Activated T-helper 2 cell treated with anti-CD3 and anti-CD28 coated beads, Interferon-gamma antibody, Interleukin-2, Interleukin-4, amounts not matched to agents 10 μg/mL and 5 μg/mL and 100 μg/mL, durations not matched to agents 14 hours and 24 hours and 36 hours (primary cell): ENCODE measurements at regions of chr2 and their contacts with region 1.

Region 1: GRCh38 chr2:69893684-69894551 is at the start of gene SNRNP27:
- DNase-seq: peak; percentile 72
- H3K4me3 Mint-ChIP-seq: peak within 1 kb of the TSS; percentile 98
- H3K27ac Mint-ChIP-seq: peak within 1 kb of the TSS; percentile 97
- H3K4me1 Mint-ChIP-seq: peaks cover 28% of the 10 kb centered on the region
- H3K27me3 Mint-ChIP-seq: no peaks in the 10 kb centered on the region
- total RNA-seq, gene SNRNP27: 60.4 and 62.6 TPM in 2 replicates

Region 2: DNA sequence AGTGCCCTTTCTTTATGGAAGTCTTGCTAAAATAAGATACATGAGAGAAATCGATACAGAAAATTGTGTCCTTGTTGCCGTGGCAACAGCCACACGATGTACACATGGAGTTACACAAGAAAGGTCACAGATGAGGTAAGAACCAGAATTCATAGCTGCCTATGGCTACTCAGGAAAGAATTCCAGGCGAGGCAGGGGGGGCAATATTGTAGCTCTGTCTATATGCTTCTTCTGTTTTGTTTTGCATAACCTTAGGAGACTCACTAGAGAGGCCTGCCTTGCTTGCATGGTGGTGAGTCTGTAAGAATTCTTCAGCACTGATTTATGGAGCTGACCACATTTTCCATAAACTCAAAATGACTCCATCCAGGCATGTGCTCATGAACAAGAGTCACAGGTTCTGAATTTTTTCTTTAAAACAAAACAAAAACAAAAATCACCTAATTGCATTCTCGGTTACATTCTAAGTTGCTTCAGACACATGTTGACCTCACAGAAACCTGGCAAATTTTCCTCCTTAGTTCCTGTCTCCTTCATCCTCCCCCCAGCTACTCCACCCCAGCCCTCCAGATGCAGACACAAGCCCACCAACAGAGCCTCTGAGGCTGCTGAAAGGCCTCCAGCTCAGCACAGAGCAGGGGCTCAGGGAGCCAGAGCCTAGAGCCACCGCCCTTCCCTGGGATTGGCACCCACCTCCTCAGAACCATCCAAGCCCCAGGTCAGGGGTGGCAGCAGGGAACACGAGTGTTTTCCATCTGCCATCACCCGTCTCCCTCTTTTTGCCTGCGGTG is 697.4 kb before region 1 on chr2:
- intact Hi-C with region 1: no loop called
- DNase-seq: no peak
- H3K4me3 Mint-ChIP-seq: no peak overlapping the region
- H3K27ac Mint-ChIP-seq: no peak overlapping the region
- H3K4me1 Mint-ChIP-seq: no peaks in the 10 kb centered on the region
- H3K27me3 Mint-ChIP-seq: peaks cover 16% of the 10 kb centered on the region

Region 3: GRCh38 chr2:69643602-69644505 is 250.1 kb before region 1 on chr2 and contains the start of gene AAK1:
- intact Hi-C with region 1: no loop called
- DNase-seq: peak; percentile 79
- H3K4me3 Mint-ChIP-seq: peak within 1 kb of the TSS; percentile 95
- H3K27ac Mint-ChIP-seq: peak within 1 kb of the TSS; percentile 98
- H3K4me1 Mint-ChIP-seq: peaks cover 63% of the 10 kb centered on the region
- H3K27me3 Mint-ChIP-seq: no peaks in the 10 kb centered on the region
- total RNA-seq, gene AAK1: 108 TPM in 2 replicates

Region 4: DNA sequence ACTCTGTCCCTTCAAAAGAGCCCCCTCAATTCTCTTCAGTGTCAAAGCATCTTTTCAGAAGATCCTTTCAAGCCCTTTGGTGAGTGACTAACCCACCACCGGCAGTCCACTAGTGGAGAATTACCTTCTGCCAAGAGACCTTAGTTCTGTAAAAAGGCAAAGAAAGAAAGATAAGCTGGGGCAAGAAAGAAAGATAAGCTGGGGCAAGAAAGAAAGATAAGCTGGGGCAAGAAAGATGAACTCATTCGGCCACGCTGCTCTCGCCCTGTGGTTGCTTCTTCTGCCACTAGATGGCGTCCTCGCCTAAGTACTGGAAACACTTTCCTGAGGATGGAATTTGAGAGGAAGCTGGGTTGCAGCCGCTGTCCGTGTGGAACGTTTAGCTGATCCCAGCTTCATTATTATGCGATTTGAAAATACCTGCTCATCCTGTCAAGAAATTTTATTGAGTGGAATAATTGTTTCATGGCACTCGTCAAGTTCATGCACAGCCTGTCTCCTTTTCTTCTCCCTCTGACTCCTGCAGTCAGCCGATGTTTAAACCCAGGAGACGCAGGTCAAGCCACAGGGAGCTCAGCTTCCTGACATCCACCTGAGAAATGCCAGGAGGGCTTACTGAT is 169.3 kb before region 1 on chr2:
- intact Hi-C with region 1: loop called (anchors 5 kb)
- DNase-seq: peak; percentile 79
- H3K4me3 Mint-ChIP-seq: peak overlapping the region; percentile 39
- H3K27ac Mint-ChIP-seq: no peak overlapping the region
- H3K4me1 Mint-ChIP-seq: peaks cover 10% of the 10 kb centered on the region
- H3K27me3 Mint-ChIP-seq: no peaks in the 10 kb centered on the region

Region 5: DNA sequence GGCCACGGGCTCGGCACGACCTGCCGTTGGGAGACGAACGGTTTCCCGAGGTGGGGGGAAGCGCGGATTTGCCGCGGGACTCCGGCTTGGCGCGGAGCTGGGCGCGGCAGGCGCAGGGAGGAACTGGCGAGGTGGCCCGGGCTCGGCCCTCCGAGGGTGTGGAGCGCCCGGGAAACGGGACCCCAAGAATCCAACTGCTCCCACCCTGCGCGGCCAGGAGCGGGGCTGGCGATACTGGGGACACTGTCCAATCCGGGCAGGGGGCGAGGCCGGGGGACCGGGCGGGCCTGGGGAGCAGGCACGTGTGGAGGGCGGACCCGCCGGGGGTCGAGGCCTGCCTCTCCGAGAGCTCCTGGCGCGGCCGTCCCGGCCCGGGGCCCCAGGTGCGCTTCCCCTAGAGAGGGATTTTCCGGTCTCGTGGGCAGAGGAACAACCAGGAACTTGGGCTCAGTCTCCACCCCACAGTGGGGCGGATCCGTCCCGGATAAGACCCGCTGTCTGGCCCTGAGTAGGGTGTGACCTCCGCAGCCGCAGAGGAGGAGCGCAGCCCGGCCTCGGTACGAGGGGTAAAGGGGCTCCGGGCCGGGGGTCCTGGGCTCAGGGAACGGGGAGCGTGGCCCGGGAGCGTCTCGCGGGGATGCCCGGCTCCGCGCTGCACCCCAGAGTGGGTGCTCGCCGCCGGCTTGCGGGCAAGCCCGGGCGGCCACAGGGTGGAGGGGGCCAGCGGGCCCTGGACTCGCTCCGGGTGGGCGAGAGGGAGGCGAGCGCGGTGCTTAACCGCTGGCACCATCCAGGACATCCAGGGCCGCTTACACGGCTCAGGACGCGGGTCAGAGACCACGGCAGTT is 152.1 kb before region 1 on chr2 and contains the start of gene ANXA4:
- intact Hi-C with region 1: loop called (anchors 5 kb)
- DNase-seq: peak; percentile 65
- H3K4me3 Mint-ChIP-seq: peak within 1 kb of the TSS; percentile 92
- H3K27ac Mint-ChIP-seq: peak within 1 kb of the TSS; percentile 89
- H3K4me1 Mint-ChIP-seq: peaks cover 28% of the 10 kb centered on the region
- H3K27me3 Mint-ChIP-seq: peaks cover 12% of the 10 kb centered on the region
- total RNA-seq, gene ANXA4: 45.6 and 52.9 TPM in 2 replicates

Region 6: GRCh38 chr2:69933839-69934613 is 40.1 kb after region 1 on chr2:
- intact Hi-C with region 1: no loop called
- DNase-seq: no peak
- H3K4me3 Mint-ChIP-seq: no peak overlapping the region
- H3K27ac Mint-ChIP-seq: peak overlapping the region; percentile 25
- H3K4me1 Mint-ChIP-seq: peaks cover 25% of the 10 kb centered on the region
- H3K27me3 Mint-ChIP-seq: no peaks in the 10 kb centered on the region